ENCODE measurements at regions of chr17 and their contacts with region 1.

Region 1: GRCh38 chr17:81977211-81978027 is at the start of gene ASPSCR1:
- DNase-seq: peak; percentile 95
- total RNA-seq, gene ASPSCR1: 25.5 TPM

Region 2: DNA sequence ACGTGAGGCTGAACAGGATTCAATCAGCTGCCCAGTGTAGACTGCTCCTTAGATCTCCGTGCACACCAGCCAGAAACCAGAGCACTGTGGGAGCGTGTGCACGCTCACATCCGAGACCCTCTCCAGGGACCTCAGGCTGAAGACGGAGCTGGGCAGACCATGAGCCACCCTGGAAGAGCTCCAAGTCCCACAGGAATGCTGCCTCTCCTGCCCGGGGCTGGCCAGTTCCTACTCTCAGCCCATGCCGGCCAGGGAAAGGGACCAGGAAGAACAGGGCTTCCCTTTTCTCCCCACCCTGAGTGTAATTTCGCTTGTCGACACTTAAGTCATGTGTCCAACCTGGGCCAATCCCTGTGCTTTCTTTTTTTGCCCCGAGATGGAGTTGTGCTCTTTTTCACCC is 92.9 kb before region 1 on chr17:
- intact Hi-C with region 1: no loop called
- DNase-seq: no peak

Region 3: DNA sequence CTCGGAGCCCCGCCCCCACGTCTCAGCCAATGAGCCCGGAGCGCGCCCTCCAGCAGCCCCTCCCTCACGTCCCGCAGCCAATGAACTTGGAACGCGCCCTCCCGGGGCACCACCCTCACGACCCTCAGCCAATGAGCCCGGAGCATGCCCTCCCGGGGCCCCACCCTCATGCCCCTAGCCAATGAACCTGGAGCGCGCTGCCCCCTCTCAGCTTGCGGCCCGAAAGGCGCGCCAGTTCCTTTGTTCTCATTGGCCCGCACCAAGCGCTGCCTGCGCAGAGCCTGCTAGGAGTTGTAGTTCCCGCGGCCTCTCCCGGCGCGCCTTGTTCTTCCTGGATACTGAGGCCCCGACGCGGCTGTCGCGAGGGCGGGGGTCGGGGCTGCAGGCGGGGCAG is 45.6 kb after region 1 on chr17 and contains the start of gene LRRC45:
- intact Hi-C with region 1: loop called (anchors 5 kb)
- DNase-seq: peak; percentile 100
- total RNA-seq, gene LRRC45: 3.3 TPM

Region 4: GRCh38 chr17:82216301-82217119 is 239.1 kb after region 1 on chr17:
- intact Hi-C with region 1: no loop called
- DNase-seq: peak; percentile 93

Measured in cardiac septum (tissue), 1 donor.